PC-3 (cell line): ENCODE measurements at regions of chr12 and their contacts with region 1.

Region 1: DNA sequence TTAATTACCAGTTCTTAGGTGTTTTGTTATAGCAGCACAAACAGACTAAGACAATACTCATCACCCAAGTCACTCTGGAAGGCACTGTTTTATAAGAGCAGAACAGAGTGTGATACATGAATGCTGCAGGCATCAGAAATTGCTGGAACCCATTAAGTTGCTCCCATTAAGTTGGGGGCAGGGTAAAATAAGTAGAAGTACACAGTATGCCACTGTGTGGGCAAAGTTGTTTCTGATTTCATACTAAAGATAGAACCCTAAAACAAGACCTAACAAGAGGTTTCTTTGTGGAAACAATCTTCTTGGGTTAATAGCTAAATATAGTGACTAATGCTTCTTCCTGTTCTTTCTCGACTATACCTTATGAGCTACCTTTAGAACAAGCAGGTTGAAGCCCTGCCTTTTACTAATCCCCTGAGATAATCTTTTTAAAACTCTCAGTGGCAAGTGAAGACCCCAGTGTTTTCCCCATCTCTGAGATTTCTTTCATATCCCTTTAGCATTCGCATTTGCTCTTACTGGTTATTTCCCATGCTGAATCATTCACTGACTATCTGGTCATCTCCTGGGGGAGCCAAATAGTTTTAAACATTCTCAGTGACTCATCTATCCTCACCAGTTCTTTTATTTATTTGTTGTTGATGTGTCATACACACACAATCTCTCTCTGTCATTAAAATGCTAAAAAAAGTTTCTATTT is 52.3 kb downstream of the SOCS2 start:
- DNase-seq: peak; percentile 95
- ATAC-seq: peak; percentile 85
- H3K4me3 ChIP-seq: peak overlapping the region; percentile 7; the same call in 1 of the 2 replicates
- H3K27ac ChIP-seq: peak overlapping the region; percentile 93
- H3K4me1 ChIP-seq: peaks cover 36% of the 10 kb centered on the region
- H3K27me3 ChIP-seq: no peaks in the 10 kb centered on the region
- CTCF ChIP-seq: no peak

Region 2: GRCh38 chr12:93677195-93678064 is 52.7 kb after region 1 on chr12 and contains the start of gene CRADD:
- CTCF ChIA-PET with region 1: no interaction called
- POLR2A ChIA-PET with region 1: no interaction called
- intact Hi-C with region 1: loop called (anchors 10 kb)
- DNase-seq: peak; percentile 95
- ATAC-seq: peak; percentile 90
- H3K4me3 ChIP-seq: peak within 1 kb of the TSS; percentile 88
- H3K27ac ChIP-seq: peak within 1 kb of the TSS; percentile 94
- H3K4me1 ChIP-seq: peaks cover 15% of the 10 kb centered on the region
- H3K27me3 ChIP-seq: no peaks in the 10 kb centered on the region
- CTCF ChIP-seq: no peak
- total RNA-seq, gene CRADD: 11.4 and 12.5 TPM in 2 replicates